HEK293T (cell line): ENCODE measurements at regions of chr1 and their contacts with region 1.

Region 1: GRCh38 chr1:6438047-6438525 is 13.5 kb downstream of the ESPN start:
- DNase-seq: peak; percentile 85

Region 2: GRCh38 chr1:6423321-6423999 is 14.6 kb before region 1 on chr1:
- CTCF ChIA-PET with region 1: interaction called, 25 read pairs
- POLR2A ChIA-PET with region 1: no interaction called
- DNase-seq: peak; percentile 78

Region 3: DNA sequence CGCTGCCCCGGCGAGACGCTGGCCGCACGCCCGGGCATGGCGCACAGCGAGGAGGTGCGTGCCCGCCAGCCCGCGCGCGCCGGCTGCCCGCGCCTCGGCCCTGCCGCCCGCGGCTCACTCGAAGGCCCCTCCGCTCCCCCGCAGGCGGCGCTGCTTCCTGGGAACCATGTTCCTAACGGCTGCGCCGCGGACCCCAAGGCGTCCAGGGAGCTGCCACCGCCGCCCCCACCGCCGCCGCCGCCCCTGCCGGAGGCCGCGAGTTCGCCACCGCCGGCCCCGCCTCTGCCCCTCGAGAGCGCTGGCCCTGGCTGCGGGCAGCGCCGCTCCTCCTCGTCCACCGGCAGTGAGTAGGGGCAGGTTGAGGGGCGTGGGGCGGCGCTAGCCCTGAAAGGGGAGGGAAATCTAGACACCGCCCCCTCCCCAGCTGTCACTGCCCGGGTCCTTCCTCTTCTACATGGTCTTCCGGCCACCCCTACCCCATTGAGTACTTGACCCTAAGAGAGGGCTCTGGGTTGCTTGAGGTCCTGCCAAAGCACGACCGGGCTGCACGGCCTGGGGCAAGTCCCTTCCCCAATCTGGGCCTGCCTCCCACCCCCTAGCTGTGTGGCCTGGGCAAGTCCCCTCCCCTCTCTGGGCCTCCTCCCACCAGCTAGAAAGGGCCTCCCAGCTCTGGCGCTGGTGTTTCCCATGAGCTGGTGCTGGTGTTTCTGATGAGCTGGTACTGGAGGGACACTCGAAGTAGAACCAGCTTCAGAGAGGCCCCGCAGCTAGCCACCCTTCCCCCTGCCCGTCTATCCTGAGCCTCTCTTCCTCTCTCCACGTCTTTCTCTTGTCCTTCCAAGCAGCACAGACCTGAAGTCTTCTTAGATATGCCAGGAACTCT is 10.9 kb after region 1 on chr1:
- CTCF ChIA-PET with region 1: interaction called, 18 read pairs
- POLR2A ChIA-PET with region 1: no interaction called
- DNase-seq: no peak

Region 4: GRCh38 chr1:6472391-6472790 is 34.3 kb after region 1 on chr1:
- CTCF ChIA-PET with region 1: no interaction called
- POLR2A ChIA-PET with region 1: no interaction called
- DNase-seq: no peak